CD8-positive, alpha-beta T cell (primary cell): ENCODE measurements at regions of chr5 and their contacts with region 1.

Region 1: DNA sequence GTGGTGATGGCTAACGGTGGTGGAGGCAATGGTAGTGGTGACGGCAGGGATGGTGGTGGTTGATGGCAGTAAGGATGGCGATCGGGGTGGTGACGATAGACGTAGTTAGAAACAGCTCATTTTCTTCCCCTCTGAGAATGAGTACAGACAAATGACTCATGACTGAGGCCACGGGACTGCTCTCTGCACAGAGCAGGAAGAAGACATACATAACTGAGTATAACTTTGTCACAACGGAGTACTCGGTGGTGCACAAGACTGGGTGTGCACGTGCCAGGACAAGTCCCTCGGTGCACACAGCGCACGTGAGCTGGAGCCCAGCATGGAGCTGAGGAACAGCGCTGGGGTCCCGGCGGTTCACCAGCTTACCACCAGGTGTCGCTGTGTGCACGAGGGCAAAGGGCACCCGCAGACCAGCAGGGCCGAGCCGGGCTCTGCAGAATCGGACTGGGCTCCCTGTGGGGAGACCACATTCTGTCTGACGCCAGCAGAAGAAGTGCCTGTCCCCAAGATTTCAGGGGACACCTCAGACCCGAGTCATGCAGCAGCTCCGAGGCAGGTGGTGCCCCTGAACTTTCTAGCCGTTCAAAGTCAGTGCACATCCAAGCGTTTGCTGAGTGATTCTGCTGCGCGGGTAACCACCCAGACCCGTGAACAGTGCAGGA is 188.6 kb downstream of the FSTL4 start:
- DNase-seq: peak; percentile 30 to 79 (median 67)
- ATAC-seq: peak; percentile 82
- H3K4me3 ChIP-seq: no peak overlapping the region
- H3K4me3 Mint-ChIP-seq: no peak overlapping the region
- H3K27ac ChIP-seq: no peak overlapping the region
- H3K27ac Mint-ChIP-seq: no peak overlapping the region
- H3K4me1 ChIP-seq: no peaks in the 10 kb centered on the region
- H3K4me1 Mint-ChIP-seq: peaks cover 5% of the 10 kb centered on the region
- H3K27me3 ChIP-seq: peaks cover 0 to 3% of the 10 kb centered on the region in 2 experiments
- H3K27me3 Mint-ChIP-seq: peaks cover 14% of the 10 kb centered on the region
- CTCF ChIP-seq: peak; percentile 84

Region 2: GRCh38 chr5:132490486-132491367 is 933.0 kb before region 1 on chr5 and contains the start of gene IRF1:
- CTCF ChIA-PET with region 1: no interaction called
- POLR2A ChIA-PET with region 1: no interaction called
- intact Hi-C with region 1: no loop called
- DNase-seq: peak; percentile 94 to 99 (median 97)
- ATAC-seq: peak; percentile 74
- H3K4me3 ChIP-seq: peak within 1 kb of the TSS; percentile 90 to 96
- H3K4me3 Mint-ChIP-seq: peak within 1 kb of the TSS; percentile 96
- H3K27ac ChIP-seq: peak within 1 kb of the TSS; percentile 95 to 98
- H3K27ac Mint-ChIP-seq: peak within 1 kb of the TSS; percentile 97
- H3K4me1 ChIP-seq: peaks cover 75% of the 10 kb centered on the region
- H3K4me1 Mint-ChIP-seq: peaks cover 75% of the 10 kb centered on the region
- H3K27me3 ChIP-seq: no peaks in the 10 kb centered on the region
- H3K27me3 Mint-ChIP-seq: no peaks in the 10 kb centered on the region
- CTCF ChIP-seq: no peak
- total RNA-seq, gene IRF1: 1,214 to 1,250 TPM

Region 3: DNA sequence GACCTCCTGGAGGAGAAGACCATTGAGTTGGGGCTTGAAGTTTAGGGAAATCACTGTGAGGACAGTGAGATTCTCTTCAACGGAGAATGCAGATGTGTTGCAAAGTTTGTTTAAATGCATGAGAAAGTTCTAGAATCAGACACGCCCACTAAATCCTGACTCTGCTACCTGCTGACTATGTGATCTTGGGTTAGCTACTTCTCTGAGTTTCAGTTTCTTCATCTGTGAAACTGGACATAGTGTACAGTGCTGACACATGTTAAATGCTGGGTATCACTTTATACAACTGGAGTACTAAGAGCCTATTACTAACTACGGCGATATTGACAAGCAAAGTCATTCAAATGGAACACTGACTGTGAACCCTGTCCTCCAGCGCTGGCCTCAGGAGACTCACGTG is 116.5 kb before region 1 on chr5:
- CTCF ChIA-PET with region 1: no interaction called
- POLR2A ChIA-PET with region 1: no interaction called
- intact Hi-C with region 1: no loop called
- DNase-seq: no peak
- ATAC-seq: no peak
- H3K4me3 ChIP-seq: no peak overlapping the region
- H3K4me3 Mint-ChIP-seq: no peak overlapping the region
- H3K27ac ChIP-seq: no peak overlapping the region
- H3K27ac Mint-ChIP-seq: no peak overlapping the region
- H3K4me1 ChIP-seq: no peaks in the 10 kb centered on the region
- H3K4me1 Mint-ChIP-seq: no peaks in the 10 kb centered on the region
- H3K27me3 ChIP-seq: no peaks in the 10 kb centered on the region
- H3K27me3 Mint-ChIP-seq: peaks cover 2% of the 10 kb centered on the region
- CTCF ChIP-seq: no peak

Region 4: GRCh38 chr5:133445744-133446143 is 22.0 kb after region 1 on chr5:
- CTCF ChIA-PET with region 1: interaction called, 14 read pairs
- POLR2A ChIA-PET with region 1: no interaction called
- intact Hi-C with region 1: no loop called
- DNase-seq: no peak
- ATAC-seq: no peak
- H3K4me3 ChIP-seq: no peak overlapping the region
- H3K4me3 Mint-ChIP-seq: no peak overlapping the region
- H3K27ac ChIP-seq: no peak overlapping the region
- H3K27ac Mint-ChIP-seq: no peak overlapping the region
- H3K4me1 ChIP-seq: no peaks in the 10 kb centered on the region
- H3K4me1 Mint-ChIP-seq: no peaks in the 10 kb centered on the region
- H3K27me3 ChIP-seq: no peaks in the 10 kb centered on the region
- H3K27me3 Mint-ChIP-seq: peaks cover 4% of the 10 kb centered on the region
- CTCF ChIP-seq: no peak

Region 5: DNA sequence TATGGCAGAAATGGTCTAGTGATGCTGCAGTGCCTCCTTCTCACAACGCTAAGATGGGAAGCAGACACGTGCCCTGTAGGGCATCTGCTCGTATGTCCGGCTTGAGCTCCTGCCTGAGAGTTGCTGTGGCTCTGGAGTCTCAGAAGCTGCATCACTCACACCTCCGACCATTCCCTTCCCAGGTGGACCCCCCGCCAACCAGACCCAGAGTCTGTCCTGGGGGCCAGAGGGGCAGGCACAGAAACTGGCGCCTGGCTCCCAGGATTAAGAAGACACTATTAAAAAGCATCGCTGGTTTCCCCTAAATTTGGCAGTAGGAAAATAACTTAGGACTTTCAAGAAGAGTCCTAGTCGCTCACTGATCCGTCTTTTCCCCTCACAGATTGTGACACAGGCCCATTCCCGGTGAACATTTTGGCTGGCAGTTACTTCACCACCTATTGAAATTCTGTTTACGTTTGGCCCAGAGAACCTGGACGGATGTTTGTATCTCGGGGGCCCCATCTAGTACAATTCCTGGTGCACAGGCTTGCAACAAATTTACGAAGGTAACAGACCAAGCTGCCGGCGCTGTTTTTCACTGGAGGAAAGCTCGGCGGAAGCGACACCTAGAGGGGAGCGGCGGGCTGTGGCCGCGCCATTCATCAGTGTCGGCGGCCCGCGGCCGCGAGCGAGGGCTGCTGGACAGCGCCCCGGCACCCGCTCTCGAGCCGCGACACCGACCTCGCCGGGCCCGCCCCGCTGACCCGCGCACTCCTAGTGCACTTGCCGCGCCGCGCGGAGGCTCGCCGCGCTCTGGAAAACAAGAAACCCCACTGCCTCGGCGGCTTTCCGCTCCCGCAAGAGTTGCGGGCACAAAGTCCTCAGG is 187.0 kb after region 1 on chr5:
- CTCF ChIA-PET with region 1: interaction called, 5 read pairs
- POLR2A ChIA-PET with region 1: no interaction called
- intact Hi-C with region 1: loop called in 1 of 2 experiments (anchors 2 kb)
- DNase-seq: peak in 4 of 9 experiments; percentile 18 to 40 (median 31)
- ATAC-seq: peak; percentile 38
- H3K4me3 ChIP-seq: peak overlapping the region; percentile 14 to 54
- H3K4me3 Mint-ChIP-seq: peak overlapping the region; percentile 72
- H3K27ac ChIP-seq: no peak overlapping the region
- H3K27ac Mint-ChIP-seq: no peak overlapping the region
- H3K4me1 ChIP-seq: peaks cover 5% of the 10 kb centered on the region
- H3K4me1 Mint-ChIP-seq: peaks cover 14% of the 10 kb centered on the region
- H3K27me3 ChIP-seq: peaks cover 3 to 17% of the 10 kb centered on the region in 2 experiments
- H3K27me3 Mint-ChIP-seq: peaks cover 57% of the 10 kb centered on the region
- CTCF ChIP-seq: no peak

Region 6: GRCh38 chr5:133825631-133826289 is 402.0 kb after region 1 on chr5:
- CTCF ChIA-PET with region 1: no interaction called
- POLR2A ChIA-PET with region 1: no interaction called
- intact Hi-C with region 1: no loop called
- DNase-seq: peak; percentile 17 to 78 (median 51)
- ATAC-seq: peak; percentile 95
- H3K4me3 ChIP-seq: no peak overlapping the region
- H3K4me3 Mint-ChIP-seq: peak overlapping the region; percentile 47
- H3K27ac ChIP-seq: peak overlapping the region; percentile 24 to 26
- H3K27ac Mint-ChIP-seq: peak overlapping the region; percentile 93
- H3K4me1 ChIP-seq: peaks cover 38% of the 10 kb centered on the region
- H3K4me1 Mint-ChIP-seq: peaks cover 57% of the 10 kb centered on the region
- H3K27me3 ChIP-seq: no peaks in the 10 kb centered on the region
- H3K27me3 Mint-ChIP-seq: no peaks in the 10 kb centered on the region
- CTCF ChIP-seq: no peak

Region 7: DNA sequence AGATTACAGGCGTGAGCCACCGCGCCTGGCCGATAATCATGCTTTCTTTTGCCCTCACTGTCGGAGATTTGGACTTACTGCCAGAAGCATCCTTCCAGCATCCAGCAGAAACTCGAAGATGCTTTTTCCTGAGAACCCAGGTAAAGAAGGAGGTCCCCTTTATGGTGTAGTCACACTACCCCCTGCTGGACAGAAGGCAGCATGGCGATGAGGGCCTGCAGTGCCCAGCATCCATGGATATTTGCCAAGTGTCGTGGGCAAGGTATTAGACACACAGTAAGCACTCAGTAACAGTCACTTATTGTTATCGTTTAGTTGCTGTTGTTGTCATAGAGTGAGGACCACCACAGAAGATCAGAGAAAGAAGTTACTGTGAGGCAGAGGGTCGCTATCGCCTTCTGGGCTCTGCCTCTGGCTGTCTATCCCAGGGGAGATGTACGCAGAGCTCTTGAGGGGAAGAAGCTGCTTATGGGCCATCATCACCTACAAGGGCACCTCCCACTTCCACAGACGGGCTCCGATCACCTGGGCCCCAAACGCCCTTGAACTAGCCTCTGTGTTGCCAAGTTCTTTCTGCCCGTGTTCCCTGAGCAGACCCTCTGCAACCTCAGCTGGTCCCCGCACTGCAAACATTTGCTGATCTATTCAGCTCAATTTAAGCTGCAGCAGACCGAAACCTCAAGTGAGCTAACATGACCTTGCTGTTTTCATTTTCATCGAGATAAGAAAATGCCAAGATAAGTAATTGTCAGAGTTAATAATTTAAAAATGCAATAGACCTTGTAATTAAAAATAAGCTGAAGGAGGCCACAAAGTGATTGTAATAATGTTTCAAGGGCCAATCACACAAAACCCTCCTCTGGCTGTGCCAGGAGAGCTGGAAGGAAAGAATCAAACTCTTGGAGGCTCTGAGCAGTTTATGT is 520.8 kb after region 1 on chr5:
- CTCF ChIA-PET with region 1: interaction called, 5 read pairs
- POLR2A ChIA-PET with region 1: no interaction called
- intact Hi-C with region 1: loop called in 1 of 2 experiments (anchors 5 kb)
- DNase-seq: peak in 5 of 9 experiments; percentile 29 to 50 (median 38)
- ATAC-seq: no peak
- H3K4me3 ChIP-seq: no peak overlapping the region
- H3K4me3 Mint-ChIP-seq: no peak overlapping the region
- H3K27ac ChIP-seq: no peak overlapping the region
- H3K27ac Mint-ChIP-seq: no peak overlapping the region
- H3K4me1 ChIP-seq: no peaks in the 10 kb centered on the region
- H3K4me1 Mint-ChIP-seq: no peaks in the 10 kb centered on the region
- H3K27me3 ChIP-seq: no peaks in the 10 kb centered on the region
- H3K27me3 Mint-ChIP-seq: peaks cover 3% of the 10 kb centered on the region
- CTCF ChIP-seq: peak; percentile 37